SK-N-SH (cell line): ENCODE measurements at regions of chr2 and their contacts with region 1.

Region 1: DNA sequence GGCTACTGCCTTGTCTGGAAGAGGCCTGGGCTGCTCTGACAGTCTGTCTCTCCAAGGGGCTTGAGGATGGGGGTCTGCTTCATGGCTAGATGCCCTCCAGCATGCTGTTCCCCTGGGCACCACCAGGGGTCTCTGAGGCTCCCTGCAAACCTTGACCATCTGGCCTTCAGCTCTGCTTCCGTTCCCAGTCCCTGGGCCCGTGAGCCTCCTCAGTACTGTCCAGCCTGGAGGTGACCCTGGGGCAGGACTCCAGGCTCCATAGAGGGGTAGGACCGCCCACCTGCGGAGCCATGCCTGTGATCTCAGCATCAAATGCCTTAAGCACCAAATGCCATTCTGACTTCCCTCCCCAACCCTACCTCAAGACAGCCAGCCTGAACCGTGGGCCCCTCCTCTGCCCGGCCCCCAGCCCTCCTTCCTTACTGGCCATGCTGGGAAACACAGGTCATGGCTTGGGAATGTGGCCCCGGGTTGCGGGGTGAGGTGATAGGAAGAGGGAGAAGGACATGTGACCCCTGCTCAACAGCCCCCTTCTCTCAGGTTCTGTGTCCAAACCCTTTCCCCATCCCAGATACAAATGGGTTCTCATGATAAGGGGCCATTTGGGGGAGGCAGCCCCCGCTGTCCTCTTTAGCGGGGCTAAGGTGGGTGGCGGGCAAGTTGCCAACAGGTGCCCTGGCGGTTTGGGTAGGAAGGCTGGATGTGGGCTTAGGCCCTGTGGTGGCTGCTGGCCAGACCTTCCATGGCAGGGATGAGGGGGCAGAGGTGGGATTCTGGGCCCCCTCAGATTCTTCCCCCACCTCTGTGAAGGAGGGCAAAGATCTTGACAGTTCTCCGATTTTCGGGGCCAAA is 25.0 kb downstream of the SPEG start:
- DNase-seq: peak; percentile 88
- H3K4me3 ChIP-seq: no peak overlapping the region
- H3K27ac ChIP-seq: peak overlapping the region; percentile 29 to 92; a peak in 3 of 4 replicates
- H3K4me1 ChIP-seq: peaks cover 17 to 27% of the 10 kb centered on the region in 2 experiments
- H3K27me3 ChIP-seq: no peaks in the 10 kb centered on the region
- CTCF ChIP-seq: peak; percentile 87
- EP300 ChIP-seq: no peak
- RAD21 ChIP-seq: peak; percentile 77

Region 2: GRCh38 chr2:219441451-219442255 is 18.0 kb before region 1 on chr2:
- CTCF ChIA-PET with region 1: interaction called, 95 read pairs
- POLR2A ChIA-PET with region 1: interaction called, 3 read pairs
- DNase-seq: peak; percentile 98
- H3K4me3 ChIP-seq: peak overlapping the region; percentile 67 to 76
- H3K27ac ChIP-seq: peak overlapping the region; percentile 52 to 84; a peak in 3 of 4 replicates
- H3K4me1 ChIP-seq: peaks cover 45 to 49% of the 10 kb centered on the region in 2 experiments
- H3K27me3 ChIP-seq: no peaks in the 10 kb centered on the region
- CTCF ChIP-seq: no peak; the same call in 1 of the 2 replicates
- EP300 ChIP-seq: no peak
- RAD21 ChIP-seq: no peak

Region 3: GRCh38 chr2:219498280-219499057 is 38.8 kb after region 1 on chr2 and contains the start of gene GMPPA:
- CTCF ChIA-PET with region 1: interaction called, 9 read pairs
- POLR2A ChIA-PET with region 1: interaction called, 14 read pairs
- DNase-seq: peak; percentile 93
- H3K4me3 ChIP-seq: peak within 1 kb of the TSS; percentile 81 to 85
- H3K27ac ChIP-seq: peak within 1 kb of the TSS; percentile 81 to 99
- H3K4me1 ChIP-seq: peaks cover 16 to 68% of the 10 kb centered on the region in 2 experiments
- H3K27me3 ChIP-seq: no peaks in the 10 kb centered on the region
- CTCF ChIP-seq: no peak; the same call in 1 of the 2 replicates
- EP300 ChIP-seq: no peak
- RAD21 ChIP-seq: no peak
- polyA plus RNA-seq, gene GMPPA: 61.3 and 75.1 TPM in 2 replicates

Region 4: GRCh38 chr2:219521066-219521880 is 61.6 kb after region 1 on chr2:
- CTCF ChIA-PET with region 1: interaction called, 154 read pairs
- POLR2A ChIA-PET with region 1: interaction called, 15 read pairs
- DNase-seq: peak; percentile 91
- H3K4me3 ChIP-seq: peak overlapping the region; percentile 28 to 45
- H3K27ac ChIP-seq: peak overlapping the region in 1 of 2 experiments; percentile 90; a peak in 2 of 4 replicates
- H3K4me1 ChIP-seq: peaks cover 12 to 76% of the 10 kb centered on the region in 2 experiments; a peak in 1 of 4 replicates
- H3K27me3 ChIP-seq: 0 out of 2 replicates have a peak, but pooled peaks cover 7% of the 10 kb centered on the region
- CTCF ChIP-seq: peak; percentile 82
- EP300 ChIP-seq: no peak
- RAD21 ChIP-seq: peak; percentile 66

Region 5: DNA sequence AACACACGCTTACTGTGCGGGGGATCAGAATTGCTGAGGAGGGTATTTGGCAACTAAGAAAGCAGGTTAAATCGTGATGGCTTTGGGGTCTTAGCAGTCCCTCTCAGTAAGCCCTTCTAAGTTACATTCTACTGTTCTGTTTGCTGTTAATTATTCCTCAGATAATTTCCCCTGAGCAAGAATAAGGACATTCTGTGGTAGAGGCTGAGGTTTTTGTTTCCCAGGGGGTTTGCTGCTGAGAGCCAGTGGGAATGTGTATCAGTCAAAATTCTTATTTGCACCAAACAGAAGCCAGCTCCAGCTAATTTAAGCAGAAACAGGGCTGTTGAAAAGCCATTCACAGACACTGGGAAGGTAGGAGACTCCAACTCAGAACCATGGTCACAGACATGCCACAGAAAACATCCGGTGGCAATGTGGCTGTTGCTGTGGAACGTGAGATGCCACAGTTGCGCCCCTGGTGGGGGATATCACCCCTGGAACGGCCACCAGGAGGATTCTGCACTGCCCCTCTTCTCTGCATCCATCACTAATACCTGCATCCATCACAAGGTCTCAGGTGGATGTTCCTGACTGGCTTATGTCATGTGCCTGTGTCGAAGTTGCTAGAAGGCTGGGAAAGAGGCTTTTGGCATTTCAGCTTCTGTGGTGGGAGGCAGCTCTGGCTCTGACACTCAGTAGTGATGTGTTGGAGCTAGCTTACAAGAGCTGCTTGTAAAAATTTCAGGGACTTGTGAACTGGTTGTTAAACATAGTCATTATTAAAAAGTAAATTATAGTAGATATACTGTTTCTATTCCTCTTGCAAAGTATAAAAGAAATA is 191.0 kb after region 1 on chr2:
- CTCF ChIA-PET with region 1: no interaction called
- POLR2A ChIA-PET with region 1: no interaction called
- DNase-seq: no peak
- H3K4me3 ChIP-seq: no peak overlapping the region
- H3K27ac ChIP-seq: no peak overlapping the region
- H3K4me1 ChIP-seq: peaks cover 4 to 5% of the 10 kb centered on the region in 2 experiments; a peak in 2 of 4 replicates
- H3K27me3 ChIP-seq: peaks cover 14% of the 10 kb centered on the region
- CTCF ChIP-seq: no peak
- EP300 ChIP-seq: no peak
- RAD21 ChIP-seq: no peak